IMR-90 (cell line): ENCODE measurements at regions of chr3 and their contacts with region 1.

Region 1: GRCh38 chr3:169668957-169669681 is 5.6 kb upstream of the MECOM start:
- DNase-seq: peak; percentile 50
- ATAC-seq: peak; percentile 99
- H3K4me3 ChIP-seq: peak overlapping the region; percentile 41
- H3K27ac ChIP-seq: no peak overlapping the region
- H3K4me1 ChIP-seq: no peaks in the 10 kb centered on the region
- H3K27me3 ChIP-seq: peaks cover 43% of the 10 kb centered on the region
- CTCF ChIP-seq: peak; percentile 82
- POLR2A ChIP-seq: no peak
- RAD21 ChIP-seq: peak; percentile 91

Region 2: DNA sequence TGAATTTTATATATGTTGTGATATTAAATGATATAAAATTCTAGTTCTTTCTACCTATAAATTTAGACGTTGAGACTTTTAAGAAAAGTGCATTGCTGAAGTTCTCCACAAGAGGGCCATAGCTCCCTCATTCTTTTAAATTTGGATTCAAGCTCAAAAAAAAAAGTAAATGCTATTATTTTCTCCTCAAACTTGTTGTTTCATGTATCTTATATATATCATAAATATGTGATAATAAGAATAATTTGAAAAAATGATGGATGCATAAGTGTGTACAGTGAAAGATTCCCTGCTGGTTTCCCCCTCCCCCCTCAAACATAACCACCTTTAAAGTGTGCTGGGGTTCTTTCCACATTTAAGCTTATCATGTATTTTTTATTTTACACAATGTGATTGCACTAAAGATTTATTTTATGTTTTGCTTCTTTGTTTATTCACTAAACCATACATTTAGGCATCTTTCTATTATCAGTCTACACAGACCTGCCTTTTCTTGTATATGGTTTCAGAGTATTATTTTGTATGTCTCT is 804.0 kb before region 1 on chr3:
- CTCF ChIA-PET with region 1: interaction called, 18 read pairs
- POLR2A ChIA-PET with region 1: no interaction called
- dilution Hi-C with region 1: no loop called
- in situ Hi-C with region 1: loop called (anchors 10 kb)
- intact Hi-C with region 1: loop called (anchors 2 kb)
- DNase-seq: peak; percentile 48
- ATAC-seq: peak; percentile 44; the same call in 1 of the 2 replicates
- H3K4me3 ChIP-seq: no peak overlapping the region
- H3K27ac ChIP-seq: no peak overlapping the region
- H3K4me1 ChIP-seq: no peaks in the 10 kb centered on the region
- H3K27me3 ChIP-seq: no peaks in the 10 kb centered on the region
- CTCF ChIP-seq: peak; percentile 76
- POLR2A ChIP-seq: no peak
- RAD21 ChIP-seq: peak; percentile 66

Region 3: GRCh38 chr3:169041677-169042171 is 627.4 kb before region 1 on chr3:
- CTCF ChIA-PET with region 1: interaction called, 5 read pairs
- POLR2A ChIA-PET with region 1: no interaction called
- dilution Hi-C with region 1: no loop called
- in situ Hi-C with region 1: loop called (anchors 25 kb)
- intact Hi-C with region 1: no loop called
- DNase-seq: peak; percentile 80
- ATAC-seq: peak; percentile 68
- H3K4me3 ChIP-seq: no peak overlapping the region
- H3K27ac ChIP-seq: no peak overlapping the region
- H3K4me1 ChIP-seq: peaks cover 2% of the 10 kb centered on the region; the same call in 1 of the 2 replicates
- H3K27me3 ChIP-seq: no peaks in the 10 kb centered on the region
- CTCF ChIP-seq: peak; percentile 74
- POLR2A ChIP-seq: no peak
- RAD21 ChIP-seq: peak; percentile 63

Region 4: DNA sequence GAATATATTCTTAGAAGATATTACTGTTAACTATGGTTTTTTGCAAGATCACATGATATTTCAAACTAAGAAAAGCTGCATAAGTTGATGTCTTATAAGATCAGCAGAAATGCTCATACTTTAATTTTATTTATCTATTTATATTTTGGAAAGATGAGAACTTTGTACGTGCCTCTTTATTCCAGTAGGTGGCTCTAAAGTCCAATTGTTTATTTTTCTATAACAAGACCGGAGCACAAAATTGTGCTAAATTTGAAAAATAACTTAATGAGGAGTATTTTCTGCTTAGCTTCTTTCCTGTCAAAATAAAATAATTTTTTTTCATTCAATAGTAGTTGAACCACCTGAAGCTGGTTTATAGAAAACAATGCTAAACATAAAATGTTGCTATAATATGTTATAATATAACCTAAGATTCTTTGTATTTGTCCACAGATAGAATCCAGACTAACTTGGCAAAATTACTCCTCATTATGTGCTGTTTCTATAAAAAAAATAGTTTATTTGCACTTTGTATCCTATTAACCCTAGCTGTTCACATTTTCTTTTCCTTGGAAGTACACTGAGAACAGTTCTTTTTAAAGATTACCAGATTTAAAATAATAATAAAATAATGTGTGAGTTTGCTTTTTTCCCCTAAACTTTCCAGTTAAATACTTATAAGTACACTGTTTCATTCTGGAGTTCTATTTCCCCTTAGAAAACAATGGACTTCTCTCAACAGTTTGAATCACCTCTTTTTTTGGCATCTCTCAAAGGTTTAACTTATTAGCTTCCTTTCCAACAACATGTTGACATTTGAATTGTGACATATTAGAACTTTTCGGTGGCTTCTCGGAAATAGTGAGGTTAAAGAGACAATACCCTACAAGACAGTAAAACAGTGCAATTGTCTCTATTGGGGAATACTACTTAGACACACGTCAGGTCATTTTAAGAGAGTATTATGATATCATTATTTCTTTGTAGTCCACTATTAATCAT is 535.6 kb before region 1 on chr3:
- CTCF ChIA-PET with region 1: interaction called, 5 read pairs
- POLR2A ChIA-PET with region 1: no interaction called
- dilution Hi-C with region 1: no loop called
- in situ Hi-C with region 1: loop called (anchors 5 kb)
- intact Hi-C with region 1: loop called (anchors 2 kb)
- DNase-seq: peak; percentile 31
- ATAC-seq: 0 out of 2 replicates have a peak, but pooled peaks have one; percentile 44
- H3K4me3 ChIP-seq: no peak overlapping the region
- H3K27ac ChIP-seq: no peak overlapping the region
- H3K4me1 ChIP-seq: no peaks in the 10 kb centered on the region
- H3K27me3 ChIP-seq: no peaks in the 10 kb centered on the region
- CTCF ChIP-seq: peak; percentile 63
- POLR2A ChIP-seq: no peak
- RAD21 ChIP-seq: peak; percentile 53

Region 5: GRCh38 chr3:169295126-169295525 is 374.0 kb before region 1 on chr3:
- CTCF ChIA-PET with region 1: interaction called, 9 read pairs
- POLR2A ChIA-PET with region 1: no interaction called
- dilution Hi-C with region 1: no loop called
- in situ Hi-C with region 1: no loop called
- intact Hi-C with region 1: loop called (anchors 2 kb)
- DNase-seq: peak; percentile 42
- ATAC-seq: no peak
- H3K4me3 ChIP-seq: no peak overlapping the region
- H3K27ac ChIP-seq: no peak overlapping the region
- H3K4me1 ChIP-seq: no peaks in the 10 kb centered on the region
- H3K27me3 ChIP-seq: peaks cover 2% of the 10 kb centered on the region; the same call in 1 of the 2 replicates
- CTCF ChIP-seq: peak; percentile 66
- POLR2A ChIP-seq: no peak
- RAD21 ChIP-seq: peak; percentile 67